ENCODE measurements at regions of chr2 and their contacts with region 1.

Region 1: GRCh38 chr2:71299507-71299906 is 32.1 kb upstream of the ZNF638 start:
- DNase-seq: no peak
- ATAC-seq: no peak
- H3K4me3 Mint-ChIP-seq: no peak overlapping the region
- H3K27ac Mint-ChIP-seq: no peak overlapping the region
- H3K4me1 Mint-ChIP-seq: no peaks in the 10 kb centered on the region
- H3K27me3 Mint-ChIP-seq: peaks cover 2% of the 10 kb centered on the region
- CTCF ChIP-seq: peak; percentile 86

Region 2: DNA sequence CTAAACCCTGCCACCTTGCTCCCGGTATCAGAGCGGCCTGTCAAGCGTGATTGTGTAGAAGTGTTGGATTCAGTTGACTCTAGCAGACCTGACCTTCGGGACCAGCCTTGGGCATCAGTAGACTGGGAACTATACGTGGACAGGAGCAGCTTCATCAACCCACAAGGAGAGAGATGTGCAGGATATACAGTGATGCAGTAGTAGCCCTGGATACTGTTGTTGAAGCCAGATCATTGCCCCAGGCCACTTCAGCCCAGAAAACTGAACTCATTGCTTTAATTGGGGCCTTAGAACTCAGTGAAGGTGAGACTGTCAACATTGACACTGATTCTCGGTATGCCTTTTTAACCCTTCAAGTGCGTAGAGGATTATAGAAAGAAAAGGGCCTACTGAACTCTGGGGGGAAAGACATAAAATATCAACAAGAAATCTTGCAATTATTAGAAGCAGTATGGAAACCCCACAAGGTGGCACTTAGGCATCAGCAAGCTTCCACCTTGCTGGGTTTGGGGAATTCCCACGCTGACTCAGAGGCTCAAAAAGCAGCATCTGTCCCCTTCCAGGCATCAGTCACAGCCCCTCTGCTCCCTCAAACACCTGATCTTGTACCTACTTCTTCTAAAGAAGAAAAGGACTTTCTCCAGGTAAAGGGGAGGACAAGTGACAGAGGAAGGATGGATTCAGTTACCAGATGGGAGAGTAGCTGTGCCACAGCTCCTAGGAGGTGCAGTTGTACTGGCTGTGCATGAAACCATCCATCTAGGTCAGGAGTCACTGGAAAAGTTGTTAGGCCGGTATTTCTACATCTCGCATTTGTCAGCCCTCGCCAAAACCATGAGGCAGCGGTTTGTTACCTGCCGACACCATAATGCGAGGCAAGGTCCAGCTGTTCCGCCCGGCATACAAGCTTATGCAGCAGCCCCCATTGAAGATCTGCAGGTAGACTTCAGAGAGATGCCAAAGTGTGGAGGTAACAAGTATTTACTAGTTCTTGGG is 249.8 kb before region 1 on chr2:
- CTCF ChIA-PET with region 1: interaction called, 3 read pairs
- POLR2A ChIA-PET with region 1: no interaction called
- intact Hi-C with region 1: loop called (anchors 1 kb)
- DNase-seq: no peak
- ATAC-seq: peak; percentile 82
- H3K4me3 Mint-ChIP-seq: no peak overlapping the region
- H3K27ac Mint-ChIP-seq: no peak overlapping the region
- H3K4me1 Mint-ChIP-seq: peaks cover 7% of the 10 kb centered on the region
- H3K27me3 Mint-ChIP-seq: no peaks in the 10 kb centered on the region
- CTCF ChIP-seq: no peak

Region 3: GRCh38 chr2:71276311-71277146 is 23.0 kb before region 1 on chr2:
- CTCF ChIA-PET with region 1: interaction called, 10 read pairs
- POLR2A ChIA-PET with region 1: no interaction called
- intact Hi-C with region 1: no loop called
- DNase-seq: peak; percentile 90
- ATAC-seq: peak; percentile 99
- H3K4me3 Mint-ChIP-seq: peak overlapping the region; percentile 84
- H3K27ac Mint-ChIP-seq: no peak overlapping the region
- H3K4me1 Mint-ChIP-seq: peaks cover 12% of the 10 kb centered on the region
- H3K27me3 Mint-ChIP-seq: peaks cover 47% of the 10 kb centered on the region
- CTCF ChIP-seq: no peak

Region 4: DNA sequence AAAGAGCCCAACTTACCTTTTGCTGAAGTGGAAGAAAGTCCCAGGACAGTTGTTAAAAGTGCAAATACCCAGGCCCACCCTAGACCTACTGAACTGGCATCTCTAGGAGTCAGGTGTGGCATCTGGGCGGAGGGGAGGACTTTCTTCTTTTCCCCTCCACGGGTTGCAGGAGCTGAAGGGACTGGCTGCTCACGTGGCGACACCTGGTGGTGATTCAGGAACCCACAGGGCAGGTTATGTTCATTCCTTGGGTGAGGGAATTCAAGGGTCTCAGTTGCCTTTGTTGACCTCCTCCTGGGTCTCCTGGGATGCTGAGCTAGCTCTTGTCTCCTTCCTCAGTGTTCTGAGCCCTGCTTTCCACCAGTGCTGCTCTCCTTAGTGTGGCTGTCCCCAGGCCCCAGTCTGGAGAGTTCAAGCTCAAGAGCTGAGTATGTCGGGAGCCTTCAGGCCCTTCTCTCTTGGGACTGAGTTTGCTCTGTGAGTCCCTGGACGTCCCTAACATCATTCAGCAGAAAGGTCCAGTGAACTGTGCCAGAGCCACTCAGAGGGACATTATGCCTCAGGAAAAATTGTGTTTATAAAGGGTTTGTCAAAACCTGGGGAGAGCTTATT is 210.8 kb after region 1 on chr2:
- CTCF ChIA-PET with region 1: interaction called, 112 read pairs
- POLR2A ChIA-PET with region 1: interaction called, 3 read pairs
- intact Hi-C with region 1: loop called (anchors 1 kb)
- DNase-seq: peak; percentile 57
- ATAC-seq: peak; percentile 74
- H3K4me3 Mint-ChIP-seq: no peak overlapping the region
- H3K27ac Mint-ChIP-seq: no peak overlapping the region
- H3K4me1 Mint-ChIP-seq: peaks cover 2% of the 10 kb centered on the region
- H3K27me3 Mint-ChIP-seq: peaks cover 5% of the 10 kb centered on the region
- CTCF ChIP-seq: no peak

Region 5: GRCh38 chr2:72579591-72580180 is 1280.2 kb after region 1 on chr2:
- CTCF ChIA-PET with region 1: interaction called, 3 read pairs
- POLR2A ChIA-PET with region 1: no interaction called
- intact Hi-C with region 1: loop called (anchors 5 kb)
- DNase-seq: no peak
- ATAC-seq: no peak
- H3K4me3 Mint-ChIP-seq: no peak overlapping the region
- H3K27ac Mint-ChIP-seq: no peak overlapping the region
- H3K4me1 Mint-ChIP-seq: no peaks in the 10 kb centered on the region
- H3K27me3 Mint-ChIP-seq: no peaks in the 10 kb centered on the region
- CTCF ChIP-seq: no peak

Measured in activated B cell treated with CpG ODN at 0.5 μM for 24 hours (primary cell).